ENCODE measurements at regions of chr5 and their contacts with region 1.

Region 1: DNA sequence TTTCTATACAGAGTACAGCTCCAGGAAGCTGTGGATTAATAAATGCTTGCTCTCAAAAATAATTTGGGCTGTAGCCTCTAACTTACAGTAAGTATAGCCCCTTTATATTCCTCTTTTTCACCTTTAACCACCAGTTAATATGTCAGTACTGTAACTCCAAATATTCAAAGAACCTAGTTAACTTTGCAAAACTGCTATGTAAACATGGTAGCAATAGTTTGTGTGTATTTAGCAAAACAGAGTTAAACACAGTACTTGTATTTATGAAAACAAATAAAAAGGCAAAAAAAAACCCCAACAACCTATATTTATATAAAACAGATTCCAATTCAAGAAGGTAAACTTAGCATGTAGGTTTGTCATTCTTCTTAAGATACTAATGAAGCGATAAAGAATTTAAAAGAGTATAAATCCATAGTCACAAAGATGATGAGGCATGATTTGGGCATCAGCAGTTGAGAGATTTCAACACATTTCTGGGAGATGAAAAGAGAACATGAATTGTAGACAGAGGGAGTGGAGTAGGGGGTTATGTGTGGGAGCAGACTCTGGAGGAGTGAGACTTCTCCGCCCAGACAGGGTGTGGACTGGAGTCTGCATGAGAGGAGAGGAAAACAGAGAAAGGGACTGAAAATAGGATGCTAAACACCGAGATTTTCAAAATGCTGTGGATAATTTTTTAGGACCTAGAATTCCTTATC is 47.0 kb upstream of the F2RL1 start:
- DNase-seq: no peak
- H3K4me3 ChIP-seq: no peak overlapping the region
- H3K27ac ChIP-seq: no peak overlapping the region
- H3K4me1 ChIP-seq: peaks cover 5% of the 10 kb centered on the region
- H3K27me3 ChIP-seq: no peaks in the 10 kb centered on the region
- CTCF ChIP-seq: no peak

Region 2: GRCh38 chr5:76223696-76224095 is 548.2 kb before region 1 on chr5:
- intact Hi-C with region 1: no loop called
- DNase-seq: no peak
- H3K4me3 ChIP-seq: no peak overlapping the region
- H3K27ac ChIP-seq: no peak overlapping the region
- H3K4me1 ChIP-seq: no peaks in the 10 kb centered on the region
- H3K27me3 ChIP-seq: peaks cover 9% of the 10 kb centered on the region
- CTCF ChIP-seq: no peak

Region 3: GRCh38 chr5:76601470-76601869 is 170.4 kb before region 1 on chr5:
- intact Hi-C with region 1: loop called (anchors 5 kb)
- DNase-seq: no peak
- H3K4me3 ChIP-seq: no peak overlapping the region
- H3K27ac ChIP-seq: no peak overlapping the region
- H3K4me1 ChIP-seq: no peaks in the 10 kb centered on the region
- H3K27me3 ChIP-seq: peaks cover 3% of the 10 kb centered on the region
- CTCF ChIP-seq: peak; percentile 76

Region 4: DNA sequence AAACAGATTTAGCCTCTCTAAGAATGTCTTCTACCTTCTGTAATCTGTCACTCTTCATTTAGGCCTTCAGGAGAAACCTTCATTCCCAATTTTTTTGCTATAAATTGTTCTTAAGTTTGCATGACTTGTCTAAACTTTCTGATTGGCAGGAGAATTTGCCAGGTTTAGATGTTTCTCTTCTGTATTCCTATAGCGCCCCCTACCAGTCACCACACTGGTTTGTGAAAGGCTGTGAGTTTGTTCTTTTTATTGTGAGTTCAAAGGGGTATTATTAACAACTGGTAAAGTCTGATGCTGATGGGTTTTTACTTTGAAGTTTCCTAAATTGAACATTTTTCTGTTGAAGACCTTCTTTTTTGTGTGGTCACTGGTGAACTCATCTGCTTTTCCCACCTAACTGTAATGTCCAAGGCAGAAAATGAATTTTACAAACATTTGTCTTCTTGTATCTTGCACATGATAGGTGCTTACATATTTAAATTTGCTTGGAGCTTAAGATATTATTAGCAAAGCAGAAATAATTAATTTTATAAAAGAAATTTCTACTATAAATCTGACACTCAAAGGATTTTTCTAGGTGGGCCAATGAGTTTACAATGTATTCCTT is 130.2 kb before region 1 on chr5:
- intact Hi-C with region 1: no loop called
- DNase-seq: peak; percentile 30
- H3K4me3 ChIP-seq: no peak overlapping the region
- H3K27ac ChIP-seq: no peak overlapping the region
- H3K4me1 ChIP-seq: no peaks in the 10 kb centered on the region
- H3K27me3 ChIP-seq: no peaks in the 10 kb centered on the region
- CTCF ChIP-seq: peak; percentile 68

Measured in left ventricle myocardium inferior (tissue), 1 donor.